ENCODE measurements at regions of chr9 and their contacts with region 1.

Region 1: GRCh38 chr9:371349-371748 is 156.7 kb downstream of the DOCK8 start:
- DNase-seq: no peak
- H3K4me3 Mint-ChIP-seq: no peak overlapping the region
- H3K27ac Mint-ChIP-seq: peak overlapping the region; percentile 77
- H3K4me1 Mint-ChIP-seq: peaks cover 11% of the 10 kb centered on the region
- H3K27me3 Mint-ChIP-seq: no peaks in the 10 kb centered on the region

Region 2: GRCh38 chr9:336039-336438 is 35.3 kb before region 1 on chr9:
- intact Hi-C with region 1: loop called (anchors 5 kb)
- DNase-seq: no peak
- H3K4me3 Mint-ChIP-seq: no peak overlapping the region
- H3K27ac Mint-ChIP-seq: no peak overlapping the region
- H3K4me1 Mint-ChIP-seq: peaks cover 17% of the 10 kb centered on the region
- H3K27me3 Mint-ChIP-seq: no peaks in the 10 kb centered on the region